HepG2 (cell line): ENCODE measurements at regions of chr20 and their contacts with region 1.

Region 1: GRCh38 chr20:62793912-62794724 is 2.2 kb upstream of the MRGBP start:
- DNase-seq: peak; percentile 94
- ATAC-seq: peak; percentile 73
- H3K4me3 ChIP-seq: peak overlapping the region; percentile 66 to 82 (median 79)
- H3K27ac ChIP-seq: peak overlapping the region; percentile 89
- H3K4me1 ChIP-seq: peaks cover 47% of the 10 kb centered on the region
- H3K27me3 ChIP-seq: peaks cover 6 to 30% of the 10 kb centered on the region in 2 experiments; a peak in 4 of 5 replicates
- CTCF ChIP-seq: peak; percentile 44
- EP300 ChIP-seq: no peak
- POLR2A ChIP-seq: peak in 1 of 2 experiments; percentile 79; a peak in 2 of 4 replicates
- RAD21 ChIP-seq: peak; percentile 69

Region 2: DNA sequence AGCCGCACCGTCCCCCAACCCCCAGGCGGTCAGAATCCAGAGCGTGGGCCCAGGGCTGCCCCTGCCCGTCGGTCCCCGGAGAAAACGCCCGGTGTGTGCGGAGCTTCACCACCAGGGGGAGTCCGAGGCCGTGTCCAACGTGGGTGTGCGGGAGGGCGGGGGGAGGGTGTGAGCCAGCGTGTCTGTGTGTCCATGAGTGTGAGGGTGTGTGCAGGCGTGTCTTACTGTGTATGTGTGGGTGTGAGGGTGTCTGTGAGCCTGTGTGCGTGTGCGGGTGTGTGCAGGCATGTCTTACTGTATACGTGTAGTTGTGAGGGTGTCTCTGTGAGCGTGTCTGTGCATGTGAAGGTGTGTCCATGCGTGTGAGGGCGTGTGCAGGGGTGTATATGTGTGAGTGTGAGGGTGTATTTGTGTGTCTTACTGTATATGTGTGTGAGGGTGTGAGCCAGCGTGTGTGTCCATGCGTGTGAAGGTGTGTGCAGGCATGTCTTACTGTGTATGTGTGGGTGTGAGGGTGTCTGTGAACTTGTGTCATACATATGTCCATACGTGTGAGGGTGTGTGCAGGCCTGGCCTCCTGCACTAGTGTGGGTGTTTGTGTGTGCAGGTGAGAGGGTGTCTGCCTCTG is 293.8 kb before region 1 on chr20:
- CTCF ChIA-PET with region 1: interaction called, 8 read pairs
- POLR2A ChIA-PET with region 1: interaction called, 4 read pairs
- in situ Hi-C with region 1: loop called (anchors 25 kb)
- intact Hi-C with region 1: loop called (anchors 5 kb)
- DNase-seq: peak; percentile 56
- ATAC-seq: peak; percentile 70
- H3K4me3 ChIP-seq: no peak overlapping the region
- H3K27ac ChIP-seq: no peak overlapping the region
- H3K4me1 ChIP-seq: no peaks in the 10 kb centered on the region
- H3K27me3 ChIP-seq: peaks cover 14 to 52% of the 10 kb centered on the region in 2 experiments
- CTCF ChIP-seq: peak; percentile 99
- EP300 ChIP-seq: no peak
- POLR2A ChIP-seq: no peak
- RAD21 ChIP-seq: peak; percentile 89

Region 3: DNA sequence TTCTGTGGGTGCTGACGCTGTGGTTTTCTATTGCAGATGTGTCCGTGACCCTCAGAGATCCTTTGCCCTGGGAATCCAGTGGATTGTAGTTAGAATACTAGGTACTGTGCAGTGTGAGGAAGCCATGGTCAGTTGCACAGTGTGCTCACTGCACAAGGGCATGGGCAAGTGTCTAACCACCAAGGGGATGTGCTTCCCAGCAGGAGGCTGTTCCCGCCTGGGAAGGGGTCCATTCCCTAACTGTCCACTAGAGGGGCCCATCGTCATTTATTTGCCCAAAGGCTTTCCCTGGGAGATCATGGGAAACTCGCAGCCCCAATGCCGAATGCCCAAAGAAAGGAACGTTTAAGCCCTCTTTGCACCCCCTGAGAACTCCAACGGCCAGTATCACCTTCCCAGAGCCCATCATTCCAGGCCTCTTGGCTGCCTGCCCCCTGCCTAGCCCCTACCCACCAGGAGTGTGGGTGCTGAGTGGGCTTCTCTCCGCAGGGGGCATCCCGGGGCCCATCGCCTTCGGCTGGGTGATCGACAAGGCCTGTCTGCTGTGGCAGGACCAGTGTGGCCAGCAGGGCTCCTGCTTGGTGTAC is 125.6 kb before region 1 on chr20:
- CTCF ChIA-PET with region 1: interaction called, 93 read pairs
- POLR2A ChIA-PET with region 1: interaction called, 47 read pairs
- in situ Hi-C with region 1: loop called (anchors 5 kb)
- intact Hi-C with region 1: loop called (anchors 1 kb)
- DNase-seq: peak; percentile 82
- ATAC-seq: peak; percentile 41
- H3K4me3 ChIP-seq: peak overlapping the region in 2 of 3 experiments; percentile 44 to 59; a peak in 3 of 6 replicates
- H3K27ac ChIP-seq: no peak overlapping the region
- H3K4me1 ChIP-seq: peaks cover 61% of the 10 kb centered on the region
- H3K27me3 ChIP-seq: no peaks in the 10 kb centered on the region
- CTCF ChIP-seq: peak; percentile 98
- EP300 ChIP-seq: no peak
- POLR2A ChIP-seq: no peak; a peak in 1 of 4 replicates
- RAD21 ChIP-seq: peak; percentile 93

Region 4: DNA sequence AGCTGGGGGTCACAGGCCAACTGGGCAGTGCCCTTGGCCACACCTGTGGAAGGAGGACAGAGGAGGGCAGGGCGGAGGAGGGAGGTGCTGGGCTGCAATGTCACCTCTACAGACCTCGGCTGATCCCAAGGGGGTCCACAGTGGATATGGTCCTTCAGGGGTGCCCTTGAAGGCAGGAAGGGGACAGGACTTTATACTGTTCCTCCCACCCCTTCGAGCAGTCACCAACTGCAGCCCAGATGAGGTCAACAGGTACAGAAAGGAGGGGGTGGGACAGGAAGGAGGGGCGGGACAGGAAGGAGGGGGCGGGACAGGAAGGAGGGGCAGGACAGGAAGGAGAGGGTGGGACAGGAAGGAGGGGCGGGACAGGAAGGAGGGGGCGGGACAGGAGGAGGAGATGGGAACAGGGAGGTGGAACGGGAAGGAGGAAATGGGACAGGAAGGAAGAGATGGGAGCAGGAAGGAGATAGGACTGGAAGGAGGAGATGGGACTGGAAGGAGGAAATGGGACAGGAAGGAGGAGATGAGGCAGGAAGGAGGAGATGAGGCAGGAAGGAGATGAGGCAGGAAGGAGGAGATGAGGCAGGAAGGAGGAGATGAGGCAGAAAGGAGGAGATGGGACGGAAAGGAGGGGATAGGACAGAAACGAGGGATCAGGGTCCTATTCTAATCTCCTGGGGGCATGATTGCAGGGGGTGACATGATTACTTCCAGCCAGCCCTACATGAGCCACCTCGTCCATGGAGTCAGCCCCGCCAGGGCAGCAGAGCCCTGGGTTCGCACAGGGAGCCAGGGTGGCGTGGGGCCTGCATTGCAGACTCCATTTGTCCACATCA is 17.2 kb before region 1 on chr20:
- CTCF ChIA-PET with region 1: interaction called, 11 read pairs
- POLR2A ChIA-PET with region 1: interaction called, 11 read pairs
- in situ Hi-C with region 1: no loop called
- intact Hi-C with region 1: no loop called
- DNase-seq: peak; percentile 58
- ATAC-seq: peak; percentile 3
- H3K4me3 ChIP-seq: peak overlapping the region in 2 of 3 experiments; percentile 32 to 56; a peak in 3 of 6 replicates
- H3K27ac ChIP-seq: no peak overlapping the region
- H3K4me1 ChIP-seq: peaks cover 33% of the 10 kb centered on the region
- H3K27me3 ChIP-seq: peaks cover 25 to 70% of the 10 kb centered on the region in 2 experiments
- CTCF ChIP-seq: no peak; the same call in 1 of the 2 replicates
- EP300 ChIP-seq: no peak
- POLR2A ChIP-seq: no peak
- RAD21 ChIP-seq: no peak

Region 5: GRCh38 chr20:62837800-62838454 is 43.8 kb after region 1 on chr20:
- CTCF ChIA-PET with region 1: no interaction called
- POLR2A ChIA-PET with region 1: no interaction called
- in situ Hi-C with region 1: no loop called
- intact Hi-C with region 1: no loop called
- DNase-seq: peak; percentile 68
- ATAC-seq: peak; percentile 71
- H3K4me3 ChIP-seq: no peak overlapping the region
- H3K27ac ChIP-seq: no peak overlapping the region
- H3K4me1 ChIP-seq: peaks cover 11% of the 10 kb centered on the region
- H3K27me3 ChIP-seq: no peaks in the 10 kb centered on the region
- CTCF ChIP-seq: no peak
- EP300 ChIP-seq: no peak
- POLR2A ChIP-seq: no peak
- RAD21 ChIP-seq: no peak

Region 6: DNA sequence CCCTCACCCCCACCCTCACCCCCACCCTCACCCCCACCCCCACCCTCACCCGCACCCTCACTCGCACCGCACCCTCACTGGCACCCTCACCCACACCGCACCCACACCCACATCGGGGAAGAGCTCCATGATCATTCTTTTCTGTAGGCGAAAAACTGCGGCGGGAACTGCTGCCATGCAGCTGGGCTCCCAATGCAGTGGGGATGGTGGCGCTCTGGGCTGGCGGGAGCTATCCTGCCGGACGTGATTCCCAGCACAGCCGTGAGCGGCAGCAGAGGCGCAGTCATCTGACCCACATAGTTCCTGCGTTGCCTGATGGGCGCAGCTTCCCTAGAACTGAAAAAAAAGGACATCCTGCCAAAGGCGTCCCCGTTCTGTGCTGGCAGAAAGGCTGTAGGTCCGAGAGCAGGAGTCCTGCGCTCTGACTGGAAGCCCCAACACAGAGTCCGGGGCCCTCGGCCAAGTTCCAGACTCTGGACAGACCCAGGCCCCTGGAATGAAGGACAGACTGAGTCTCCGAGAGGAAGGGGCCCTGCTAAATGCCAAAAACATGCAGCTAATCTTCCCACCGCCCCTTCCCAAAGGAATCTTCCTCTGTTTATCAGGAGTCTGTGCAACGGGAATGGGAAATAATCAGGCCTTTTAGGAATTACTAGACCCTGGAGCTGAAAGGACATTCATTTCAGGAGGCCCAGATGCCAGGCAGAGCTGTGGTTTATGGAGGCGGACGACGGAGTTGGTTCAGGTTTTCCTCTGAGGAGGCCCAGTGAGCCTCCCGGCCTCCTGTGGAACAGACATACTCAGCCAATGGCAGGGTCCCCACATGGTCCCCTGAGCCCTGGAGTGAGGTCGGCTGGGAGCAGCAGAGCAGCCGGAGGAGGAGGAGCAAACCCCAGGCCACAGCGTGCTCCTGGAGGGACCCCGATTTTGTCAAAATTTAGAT is 81.6 kb after region 1 on chr20:
- CTCF ChIA-PET with region 1: no interaction called
- POLR2A ChIA-PET with region 1: interaction called, 11 read pairs
- in situ Hi-C with region 1: no loop called
- intact Hi-C with region 1: no loop called
- DNase-seq: peak; percentile 92
- ATAC-seq: peak; percentile 85
- H3K4me3 ChIP-seq: peak overlapping the region; percentile 8 to 53 (median 13); a peak in 5 of 6 replicates
- H3K27ac ChIP-seq: peak overlapping the region; percentile 48
- H3K4me1 ChIP-seq: peaks cover 67% of the 10 kb centered on the region
- H3K27me3 ChIP-seq: peaks cover 0 to 6% of the 10 kb centered on the region in 2 experiments; a peak in 2 of 5 replicates
- CTCF ChIP-seq: peak; percentile 92
- EP300 ChIP-seq: peak in 1 of 2 experiments; percentile 57; a peak in 1 of 4 replicates
- POLR2A ChIP-seq: peak in 1 of 2 experiments; percentile 59; a peak in 2 of 4 replicates
- RAD21 ChIP-seq: peak; percentile 82